Posterior vena cava (tissue), 2 donors: ENCODE measurements at regions of chr11 and their contacts with region 1.

Region 1: DNA sequence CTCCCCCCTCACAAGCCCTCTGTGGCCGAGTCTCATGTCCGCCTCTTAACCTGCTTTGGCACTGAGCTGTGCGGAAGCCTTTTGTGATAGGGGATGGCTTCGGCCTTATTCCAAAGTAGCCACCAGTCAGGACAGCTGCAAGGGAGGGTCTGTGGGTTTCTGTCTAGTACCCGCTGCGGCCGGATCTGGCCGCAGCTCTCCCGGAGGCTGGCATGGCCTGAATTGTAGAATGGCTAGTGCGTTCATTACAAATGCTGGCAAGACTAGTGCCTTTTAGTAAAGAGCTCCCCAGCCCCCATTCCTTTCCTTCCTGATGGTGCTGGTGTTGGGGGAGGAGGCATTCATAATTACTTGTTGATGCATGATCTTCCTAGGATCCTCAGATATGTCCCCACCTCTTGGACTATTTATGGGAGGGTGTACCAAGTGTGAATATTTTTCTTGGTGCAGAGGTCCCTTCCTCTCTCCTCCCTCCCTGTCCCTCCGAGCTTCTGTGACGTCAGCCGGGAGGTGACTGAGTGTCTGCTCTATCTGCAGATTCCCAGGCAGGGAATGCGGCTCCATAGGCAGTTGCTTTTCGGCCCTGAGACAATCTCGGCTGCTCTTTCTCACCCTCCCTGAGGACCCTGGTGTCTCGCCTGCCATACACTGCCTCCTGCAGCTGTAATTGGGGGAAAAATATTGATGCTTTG is 108.7 kb upstream of the E2F8 start:
- DNase-seq: no peak

Region 2: GRCh38 chr11:19524161-19524671 is 174.7 kb after region 1 on chr11:
- intact Hi-C with region 1: loop called in 1 of 2 experiments (anchors 10 kb)
- DNase-seq: no peak